ENCODE measurements at regions of chr1 and their contacts with region 1.

Region 1: GRCh38 chr1:180631766-180632325 is at the start of gene XPR1:
- DNase-seq: peak; percentile 93 to 98 (median 96)
- H3K4me3 ChIP-seq: peak within 1 kb of the TSS; percentile 74 to 94
- H3K4me3 Mint-ChIP-seq: peak within 1 kb of the TSS in 4 of 8 donors; percentile 82 to 92 (median 89)
- H3K27ac ChIP-seq: peak within 1 kb of the TSS; percentile 91
- H3K27ac Mint-ChIP-seq: peak within 1 kb of the TSS in 6 of 7 donors; percentile 75 to 95 (median 93)
- H3K4me1 ChIP-seq: peaks cover 33% of the 10 kb centered on the region
- H3K4me1 Mint-ChIP-seq: peaks cover 7 to 13% (median 9%) of the 10 kb centered on the region in 4 donors
- H3K27me3 ChIP-seq: no peaks in the 10 kb centered on the region
- H3K27me3 Mint-ChIP-seq: peaks cover 0 to 5% of the 10 kb centered on the region in 2 donors
- total RNA-seq, gene XPR1: 16.8 to 17.0 TPM

Region 2: DNA sequence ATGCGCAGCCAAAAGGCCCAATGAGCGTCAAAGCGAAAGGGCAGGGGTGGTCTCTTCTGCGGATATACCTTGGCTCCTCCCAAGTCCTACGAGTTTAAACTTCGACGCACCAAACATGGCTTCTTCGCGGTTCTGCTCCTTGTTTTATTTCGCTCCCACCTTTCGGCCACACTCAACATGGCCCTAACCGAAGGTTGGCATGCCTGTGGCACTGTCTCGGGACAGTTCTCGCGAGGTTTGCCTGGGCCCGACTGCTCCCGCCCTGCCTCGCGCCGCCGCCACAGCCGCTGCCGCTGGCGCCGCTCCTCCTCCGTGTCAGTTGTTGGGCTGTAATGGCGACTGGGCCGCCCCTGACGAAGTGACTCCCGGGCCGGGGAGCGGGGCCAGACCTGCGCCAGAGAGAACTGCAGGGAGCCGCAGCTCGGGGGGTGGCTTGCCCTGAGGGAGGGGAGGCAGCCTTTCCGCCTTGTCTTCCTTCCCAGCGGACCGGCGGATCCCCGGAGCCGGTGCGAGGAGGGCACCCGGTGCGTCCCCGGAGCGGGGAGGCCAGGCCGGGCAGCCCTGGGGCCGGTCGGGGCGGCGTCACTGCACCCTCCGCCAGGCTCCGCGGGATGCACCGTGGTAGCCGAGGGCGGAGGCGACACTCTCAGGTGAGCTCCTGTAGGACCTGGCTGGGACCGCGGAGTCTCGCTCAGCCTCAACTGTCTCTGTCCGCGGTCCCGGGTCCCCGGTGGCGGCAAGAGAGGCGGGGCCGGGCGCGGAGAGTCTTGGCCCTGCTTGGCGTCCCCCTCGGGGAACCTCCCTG is 677.2 kb before region 1 on chr1 and contains the start of gene CEP350:
- CTCF ChIA-PET with region 1: no interaction called
- POLR2A ChIA-PET with region 1: no interaction called
- intact Hi-C with region 1: loop called (anchors 5 kb)
- DNase-seq: peak; percentile 97 to 99 (median 99)
- H3K4me3 ChIP-seq: peak within 1 kb of the TSS; percentile 68 to 76
- H3K4me3 Mint-ChIP-seq: peak within 1 kb of the TSS; percentile 86 to 99 (median 91)
- H3K27ac ChIP-seq: peak within 1 kb of the TSS; percentile 90
- H3K27ac Mint-ChIP-seq: peak within 1 kb of the TSS; percentile 86 to 98 (median 95)
- H3K4me1 ChIP-seq: peaks cover 50% of the 10 kb centered on the region
- H3K4me1 Mint-ChIP-seq: peaks cover 36 to 70% (median 48%) of the 10 kb centered on the region in 4 donors
- H3K27me3 ChIP-seq: no peaks in the 10 kb centered on the region
- H3K27me3 Mint-ChIP-seq: no peaks in the 10 kb centered on the region
- total RNA-seq, gene CEP350: 86.2 to 99.4 TPM

Region 3: DNA sequence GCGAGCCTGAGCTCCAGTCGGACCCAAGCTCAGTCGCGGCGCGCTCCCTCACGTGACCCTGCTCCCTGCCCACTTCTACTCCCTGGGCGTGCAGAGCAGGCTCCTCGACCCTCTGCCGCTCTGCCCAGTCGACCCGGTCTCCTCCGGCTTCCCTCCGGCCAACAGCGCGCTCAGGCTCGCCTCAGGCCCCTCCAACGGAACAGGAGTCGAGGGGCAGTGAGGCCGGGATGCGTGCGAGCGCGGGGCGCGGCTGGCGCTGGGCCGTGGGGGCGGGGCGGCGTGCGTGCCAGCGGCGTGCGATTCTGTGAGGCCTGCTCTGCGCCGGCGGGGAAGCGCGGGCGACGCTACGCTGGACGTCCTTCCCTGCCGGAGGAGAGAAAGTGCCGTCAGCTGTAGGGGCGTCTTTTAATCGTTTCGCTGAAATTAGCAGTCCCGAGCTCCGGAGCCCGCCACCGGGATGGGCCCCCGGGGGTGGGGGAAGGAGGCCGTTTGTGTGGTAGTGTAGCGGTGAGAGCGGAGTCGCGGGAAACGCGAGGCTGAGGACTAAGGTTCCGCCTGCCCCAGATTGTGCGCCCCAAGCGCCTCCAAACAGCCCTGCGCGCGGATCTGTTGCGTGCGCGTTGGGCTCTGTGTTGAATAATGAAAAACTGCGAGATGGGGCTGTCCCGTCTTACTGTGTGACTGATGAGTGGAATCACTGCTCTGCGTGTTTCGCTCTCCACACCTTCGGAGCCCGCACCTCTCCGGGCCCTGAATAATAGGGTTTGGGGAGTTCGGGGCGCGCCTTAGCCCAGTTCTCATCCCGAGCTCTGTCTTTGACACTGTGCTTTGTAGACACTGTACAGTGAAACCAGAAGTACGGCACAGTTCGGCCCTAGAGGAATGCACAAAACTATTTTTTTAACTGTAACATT is 129.2 kb before region 1 on chr1 and contains the start of gene ACBD6:
- CTCF ChIA-PET with region 1: interaction called, 7 read pairs
- POLR2A ChIA-PET with region 1: interaction called, 11 read pairs
- intact Hi-C with region 1: loop called (anchors 1 kb)
- DNase-seq: peak; percentile 86 to 91 (median 88)
- H3K4me3 ChIP-seq: peak within 1 kb of the TSS; percentile 89 to 95
- H3K4me3 Mint-ChIP-seq: peak within 1 kb of the TSS; percentile 96 to 99 (median 98)
- H3K27ac ChIP-seq: peak within 1 kb of the TSS; percentile 71
- H3K27ac Mint-ChIP-seq: peak within 1 kb of the TSS; percentile 92 to 99 (median 97)
- H3K4me1 ChIP-seq: peaks cover 42% of the 10 kb centered on the region
- H3K4me1 Mint-ChIP-seq: peaks cover 23 to 42% (median 31%) of the 10 kb centered on the region in 4 donors
- H3K27me3 ChIP-seq: no peaks in the 10 kb centered on the region
- H3K27me3 Mint-ChIP-seq: no peaks in the 10 kb centered on the region
- total RNA-seq, gene ACBD6: 55.1 to 64.2 TPM

Region 4: DNA sequence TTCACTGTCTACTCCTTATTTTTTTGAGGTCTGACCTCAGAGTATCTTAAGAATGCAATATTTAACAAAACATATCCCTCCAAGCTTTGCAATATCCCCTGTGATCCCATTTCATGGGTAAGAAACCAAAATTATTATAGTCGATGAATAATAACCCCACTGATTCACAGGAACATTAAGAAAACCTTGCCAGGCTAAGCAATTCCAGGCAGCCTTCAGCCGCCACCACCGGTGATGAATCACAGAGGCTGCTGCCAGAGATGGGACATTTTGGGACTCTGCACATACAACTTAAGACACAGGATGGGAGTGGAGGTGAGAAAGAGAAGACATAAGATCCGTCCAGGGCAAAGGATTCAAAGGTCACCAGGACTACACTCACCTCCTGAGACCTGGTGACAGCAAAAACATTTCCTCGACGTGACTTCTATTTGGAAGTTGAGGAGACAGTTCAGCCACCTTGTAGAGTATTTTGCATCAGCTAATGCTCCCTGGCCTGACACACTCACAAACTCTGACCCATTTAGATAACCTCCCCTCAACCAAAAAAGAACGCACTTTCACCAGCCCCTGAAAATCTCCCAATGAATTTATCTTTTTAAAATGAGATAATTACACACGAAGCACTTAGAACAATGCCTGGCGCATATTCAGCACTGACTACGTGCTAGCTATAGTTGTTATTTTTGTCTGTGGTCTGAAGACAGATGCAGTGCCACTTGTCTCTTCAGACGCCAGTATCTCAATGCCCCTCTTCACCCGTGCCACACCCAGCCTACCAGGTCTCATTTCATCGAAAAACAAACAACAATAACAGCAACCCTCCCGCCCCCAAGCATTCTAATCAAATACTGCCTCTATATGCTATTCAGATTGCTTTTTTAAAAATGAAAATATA is 90.9 kb before region 1 on chr1:
- CTCF ChIA-PET with region 1: no interaction called
- POLR2A ChIA-PET with region 1: no interaction called
- intact Hi-C with region 1: no loop called
- DNase-seq: no peak
- H3K4me3 ChIP-seq: no peak overlapping the region
- H3K4me3 Mint-ChIP-seq: no peak overlapping the region
- H3K27ac ChIP-seq: no peak overlapping the region
- H3K27ac Mint-ChIP-seq: no peak overlapping the region
- H3K4me1 ChIP-seq: no peaks in the 10 kb centered on the region
- H3K4me1 Mint-ChIP-seq: no peaks in the 10 kb centered on the region
- H3K27me3 ChIP-seq: no peaks in the 10 kb centered on the region
- H3K27me3 Mint-ChIP-seq: no peaks in the 10 kb centered on the region

Region 5: DNA sequence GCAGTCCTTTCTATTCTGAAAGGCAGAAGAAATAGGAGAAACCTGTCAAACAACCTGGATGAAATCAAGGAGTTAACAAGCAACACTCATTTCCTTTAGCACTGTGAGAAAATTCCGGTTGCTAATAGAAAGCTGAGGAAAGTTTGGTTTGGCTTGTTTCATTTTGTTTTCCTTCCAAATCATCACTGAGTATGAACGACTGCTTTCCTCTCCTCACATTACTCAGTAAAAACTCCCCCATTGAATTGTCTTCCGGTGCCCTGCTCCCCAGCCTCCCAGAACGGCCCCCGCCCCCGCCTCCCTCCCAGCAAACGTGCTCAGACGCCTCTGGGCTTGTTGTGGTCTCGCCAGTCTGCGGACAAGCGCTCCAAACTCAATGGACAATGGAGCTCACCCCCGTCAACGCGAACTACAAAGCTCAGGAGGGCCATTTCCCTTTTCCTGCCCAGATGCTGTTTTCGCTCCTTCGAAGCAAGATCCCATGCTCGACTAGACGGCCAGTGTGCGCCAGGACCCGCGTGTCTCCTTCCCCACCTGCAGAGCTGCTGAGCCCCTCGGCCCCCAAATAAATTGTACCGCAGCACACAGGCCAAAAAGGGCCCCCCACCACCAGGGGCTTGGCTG is 390.1 kb after region 1 on chr1:
- CTCF ChIA-PET with region 1: no interaction called
- POLR2A ChIA-PET with region 1: interaction called, 5 read pairs
- intact Hi-C with region 1: loop called (anchors 5 kb)
- DNase-seq: peak; percentile 26 to 79 (median 43)
- H3K4me3 ChIP-seq: peak overlapping the region; percentile 73 to 90
- H3K4me3 Mint-ChIP-seq: peak overlapping the region; percentile 95 to 98 (median 96)
- H3K27ac ChIP-seq: peak overlapping the region; percentile 75
- H3K27ac Mint-ChIP-seq: peak overlapping the region; percentile 93 to 100 (median 99)
- H3K4me1 ChIP-seq: peaks cover 51% of the 10 kb centered on the region
- H3K4me1 Mint-ChIP-seq: peaks cover 32 to 66% (median 41%) of the 10 kb centered on the region in 4 donors
- H3K27me3 ChIP-seq: no peaks in the 10 kb centered on the region
- H3K27me3 Mint-ChIP-seq: peaks cover 0 to 8% of the 10 kb centered on the region in 2 donors

Region 6: DNA sequence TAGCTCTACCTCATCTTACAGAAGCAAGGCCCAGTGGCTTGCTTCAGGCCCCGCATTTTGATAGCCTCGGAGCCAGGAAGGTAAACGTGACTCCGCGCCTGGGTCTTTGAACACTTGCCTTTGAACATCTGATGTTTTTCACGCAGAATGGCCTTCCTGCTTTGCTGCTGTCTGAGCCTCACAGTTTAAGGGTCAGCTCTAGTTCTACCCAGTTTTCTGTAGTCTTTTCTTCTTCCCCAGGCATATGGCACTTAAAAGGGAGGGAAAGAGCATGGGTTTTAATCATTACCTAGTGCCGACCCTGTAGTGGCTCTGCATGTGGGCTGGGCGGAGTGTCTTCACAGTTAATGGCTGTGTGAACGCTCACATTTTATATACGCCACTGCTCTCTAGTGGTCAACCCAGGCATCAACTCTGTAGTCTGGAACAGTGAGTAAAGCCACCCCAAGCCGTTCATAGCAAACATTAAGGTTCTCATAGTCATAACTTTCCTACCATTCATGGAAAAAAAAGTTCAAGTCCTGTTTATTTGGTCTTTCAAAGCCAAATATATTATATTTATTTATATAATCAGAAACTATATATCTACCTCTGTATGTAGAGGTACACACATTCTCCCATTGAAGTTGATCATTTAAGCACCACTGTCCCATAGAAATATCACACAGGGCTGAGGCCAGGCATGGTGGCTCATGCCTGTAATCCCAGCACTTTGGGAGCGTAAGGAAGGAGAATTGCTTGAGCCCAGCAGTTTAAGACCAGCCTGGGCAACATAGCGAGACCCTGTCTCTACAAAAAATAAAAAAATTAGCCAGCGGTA is 534.7 kb after region 1 on chr1:
- CTCF ChIA-PET with region 1: no interaction called
- POLR2A ChIA-PET with region 1: no interaction called
- intact Hi-C with region 1: loop called (anchors 5 kb)
- DNase-seq: peak; percentile 72 to 78 (median 76)
- H3K4me3 ChIP-seq: no peak overlapping the region
- H3K4me3 Mint-ChIP-seq: peak overlapping the region in 7 of 8 donors; percentile 41 to 84 (median 72)
- H3K27ac ChIP-seq: no peak overlapping the region
- H3K27ac Mint-ChIP-seq: peak overlapping the region; percentile 57 to 88 (median 76)
- H3K4me1 ChIP-seq: peaks cover 6% of the 10 kb centered on the region
- H3K4me1 Mint-ChIP-seq: peaks cover 5 to 8% (median 6%) of the 10 kb centered on the region in 4 donors
- H3K27me3 ChIP-seq: no peaks in the 10 kb centered on the region
- H3K27me3 Mint-ChIP-seq: no peaks in the 10 kb centered on the region

Region 7: GRCh38 chr1:181369416-181369815 is 737.6 kb after region 1 on chr1:
- CTCF ChIA-PET with region 1: no interaction called
- POLR2A ChIA-PET with region 1: no interaction called
- intact Hi-C with region 1: no loop called
- DNase-seq: no peak
- H3K4me3 ChIP-seq: no peak overlapping the region
- H3K4me3 Mint-ChIP-seq: no peak overlapping the region
- H3K27ac ChIP-seq: no peak overlapping the region
- H3K27ac Mint-ChIP-seq: no peak overlapping the region
- H3K4me1 ChIP-seq: no peaks in the 10 kb centered on the region
- H3K4me1 Mint-ChIP-seq: no peaks in the 10 kb centered on the region
- H3K27me3 ChIP-seq: no peaks in the 10 kb centered on the region
- H3K27me3 Mint-ChIP-seq: peaks cover 0 to 1% of the 10 kb centered on the region in 2 donors

Region 8: GRCh38 chr1:182029379-182030331 is 1397.8 kb after region 1 on chr1:
- CTCF ChIA-PET with region 1: no interaction called
- POLR2A ChIA-PET with region 1: no interaction called
- intact Hi-C with region 1: loop called (anchors 2 kb)
- DNase-seq: peak; percentile 98
- H3K4me3 ChIP-seq: peak overlapping the region; percentile 92 to 94
- H3K4me3 Mint-ChIP-seq: peak overlapping the region; percentile 91 to 100 (median 96)
- H3K27ac ChIP-seq: peak overlapping the region; percentile 77
- H3K27ac Mint-ChIP-seq: peak overlapping the region; percentile 84 to 100 (median 99)
- H3K4me1 ChIP-seq: peaks cover 16% of the 10 kb centered on the region
- H3K4me1 Mint-ChIP-seq: peaks cover 14 to 21% (median 16%) of the 10 kb centered on the region in 4 donors
- H3K27me3 ChIP-seq: no peaks in the 10 kb centered on the region
- H3K27me3 Mint-ChIP-seq: no peaks in the 10 kb centered on the region